ACHN (cell line): ENCODE measurements at regions of chr22 and their contacts with region 1.

Region 1: GRCh38 chr22:39388261-39389011 is 11.1 kb upstream of the TAB1 start:
- DNase-seq: peak; percentile 88

Region 2: DNA sequence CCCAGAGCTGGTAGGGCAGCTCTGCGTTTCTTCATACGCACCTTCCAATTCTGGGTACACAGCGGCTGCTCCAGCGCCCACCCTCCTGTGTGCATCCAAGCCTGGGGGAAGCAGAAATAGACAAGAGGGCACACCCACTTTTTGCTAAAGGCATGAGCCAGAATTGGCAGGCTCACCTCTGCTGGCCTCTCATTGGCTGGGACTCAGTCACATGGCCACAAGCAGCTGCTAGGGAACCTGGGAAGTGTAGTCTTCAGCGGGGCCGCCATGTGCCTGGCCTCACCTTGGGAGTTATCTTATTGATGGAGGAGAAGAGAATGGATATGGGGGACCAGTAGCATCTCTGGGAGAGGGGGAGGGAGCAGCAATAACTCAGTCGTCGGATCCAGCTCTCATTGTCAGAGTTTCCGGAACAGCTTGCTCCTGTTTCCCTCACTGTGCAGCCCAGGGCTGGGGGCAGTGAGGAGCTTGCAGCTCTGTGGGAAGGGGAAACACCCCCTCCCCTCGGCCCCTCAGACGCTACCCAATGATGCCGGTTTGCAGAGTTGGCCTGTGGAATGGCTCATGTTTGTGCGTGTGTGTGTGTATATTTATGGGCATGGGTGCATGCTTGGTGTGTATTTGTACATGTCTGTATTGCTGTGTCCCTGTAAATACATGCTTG is 101.8 kb after region 1 on chr22:
- in situ Hi-C with region 1: loop called (anchors 25 kb)
- DNase-seq: peak; percentile 55

Region 3: DNA sequence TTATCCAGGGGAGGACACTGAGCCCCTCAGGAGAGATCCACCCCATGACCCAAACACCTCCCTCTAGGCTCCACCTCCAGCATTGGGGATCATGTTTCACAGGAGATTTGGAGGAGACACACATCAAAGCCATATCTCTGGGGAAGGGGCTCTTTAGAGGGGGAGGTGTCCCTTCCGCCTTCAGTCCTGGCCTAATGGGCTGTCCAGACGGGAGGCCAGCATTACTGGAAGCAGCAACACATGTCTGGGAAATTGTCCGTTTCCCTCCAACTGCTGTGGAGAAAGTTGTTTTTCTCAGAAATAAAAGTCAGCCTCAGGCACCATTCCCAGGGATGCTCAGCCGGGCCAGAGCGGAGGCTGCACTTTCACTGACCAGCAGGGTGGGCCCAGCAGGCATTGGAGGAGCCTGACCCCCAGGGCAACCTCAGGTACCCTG is 191.6 kb after region 1 on chr22:
- in situ Hi-C with region 1: no loop called
- DNase-seq: no peak